Activated CD8-positive, alpha-beta memory T cell treated with anti-CD3 and anti-CD28 coated beads, Interleukin-2, amount 10 ng/mL, durations not matched to agents 7 days and 5 days (primary cell): ENCODE measurements at regions of chr1 and their contacts with region 1.

Region 1: DNA sequence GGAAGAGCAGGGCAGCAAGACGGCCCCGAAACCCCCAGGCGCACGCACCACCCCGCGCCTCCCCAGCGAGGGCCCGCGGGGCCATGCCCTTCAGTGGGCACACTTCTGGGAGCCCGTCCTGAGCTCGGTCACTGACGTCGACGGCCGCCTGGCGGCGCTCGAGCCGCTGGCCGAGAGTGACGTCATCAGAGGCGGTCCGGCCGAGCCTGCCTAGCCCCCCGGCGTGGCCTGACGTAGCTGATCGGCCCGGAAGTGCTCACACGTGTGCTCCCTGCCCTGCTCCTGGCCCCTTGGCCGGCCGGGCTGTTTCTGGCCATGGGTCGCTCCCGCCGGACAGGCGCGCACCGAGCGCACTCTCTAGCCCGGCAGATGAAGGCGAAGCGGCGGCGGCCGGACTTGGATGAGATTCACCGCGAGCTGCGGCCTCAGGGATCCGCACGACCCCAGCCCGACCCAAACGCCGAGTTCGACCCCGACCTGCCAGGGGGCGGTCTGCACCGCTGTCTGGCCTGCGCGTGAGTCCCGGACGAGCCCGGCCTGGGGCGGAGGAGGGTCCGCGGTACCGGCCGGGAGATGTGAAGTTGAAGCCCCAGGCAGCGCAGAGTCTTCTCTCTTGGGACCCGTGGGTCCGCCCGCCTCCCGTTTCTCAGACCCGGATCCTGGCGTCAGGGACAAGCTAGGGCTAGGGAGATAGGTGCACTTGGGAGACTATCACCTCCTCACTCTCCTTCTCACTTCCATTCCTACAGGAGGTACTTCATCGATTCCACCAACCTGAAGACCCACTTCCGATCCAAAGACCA is at the start of gene ZNF593:
- DNase-seq: peak; percentile 92
- ATAC-seq: peak; percentile 97
- H3K4me3 Mint-ChIP-seq: peak within 1 kb of the TSS; percentile 89
- H3K27ac Mint-ChIP-seq: peak within 1 kb of the TSS; percentile 88
- H3K4me1 Mint-ChIP-seq: peaks cover 26% of the 10 kb centered on the region
- H3K27me3 Mint-ChIP-seq: peaks cover 11% of the 10 kb centered on the region
- total RNA-seq, gene ZNF593: 40.1 to 48.1 TPM

Region 2: DNA sequence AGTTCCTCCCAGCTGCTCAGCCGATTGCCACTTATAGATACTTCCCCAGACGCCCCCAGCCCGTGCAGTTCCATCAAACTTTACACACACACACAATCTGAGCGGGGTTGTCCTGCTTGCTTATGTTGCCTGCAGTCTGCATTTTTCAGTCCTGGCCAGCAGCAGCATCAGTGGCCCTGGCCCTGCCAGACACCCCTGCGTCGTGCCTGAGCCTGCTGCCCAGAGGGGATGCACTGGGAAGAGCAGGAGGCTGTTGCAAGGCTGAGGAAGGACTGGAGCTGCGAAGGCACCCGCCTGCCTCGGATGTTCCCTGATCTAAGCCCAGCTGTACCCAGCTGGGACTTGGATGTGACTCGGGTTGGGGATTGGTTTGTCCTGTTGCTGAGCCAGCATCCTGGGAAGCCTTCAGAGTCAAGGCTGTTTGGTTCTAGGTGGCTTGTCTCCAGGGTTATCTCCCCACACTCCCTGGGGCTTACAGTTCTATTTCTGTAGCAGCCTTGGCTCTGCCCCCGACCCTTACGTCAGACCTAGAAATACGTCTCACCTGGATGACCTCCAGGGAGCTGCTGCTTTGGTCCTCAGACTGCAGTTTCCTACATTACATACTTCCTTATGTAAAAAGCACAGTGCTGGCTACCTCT is 511.0 kb before region 1 on chr1:
- CTCF ChIA-PET with region 1: no interaction called
- DNase-seq: no peak
- ATAC-seq: no peak
- H3K4me3 Mint-ChIP-seq: no peak overlapping the region
- H3K27ac Mint-ChIP-seq: no peak overlapping the region
- H3K4me1 Mint-ChIP-seq: no peaks in the 10 kb centered on the region
- H3K27me3 Mint-ChIP-seq: peaks cover 35% of the 10 kb centered on the region

Region 3: DNA sequence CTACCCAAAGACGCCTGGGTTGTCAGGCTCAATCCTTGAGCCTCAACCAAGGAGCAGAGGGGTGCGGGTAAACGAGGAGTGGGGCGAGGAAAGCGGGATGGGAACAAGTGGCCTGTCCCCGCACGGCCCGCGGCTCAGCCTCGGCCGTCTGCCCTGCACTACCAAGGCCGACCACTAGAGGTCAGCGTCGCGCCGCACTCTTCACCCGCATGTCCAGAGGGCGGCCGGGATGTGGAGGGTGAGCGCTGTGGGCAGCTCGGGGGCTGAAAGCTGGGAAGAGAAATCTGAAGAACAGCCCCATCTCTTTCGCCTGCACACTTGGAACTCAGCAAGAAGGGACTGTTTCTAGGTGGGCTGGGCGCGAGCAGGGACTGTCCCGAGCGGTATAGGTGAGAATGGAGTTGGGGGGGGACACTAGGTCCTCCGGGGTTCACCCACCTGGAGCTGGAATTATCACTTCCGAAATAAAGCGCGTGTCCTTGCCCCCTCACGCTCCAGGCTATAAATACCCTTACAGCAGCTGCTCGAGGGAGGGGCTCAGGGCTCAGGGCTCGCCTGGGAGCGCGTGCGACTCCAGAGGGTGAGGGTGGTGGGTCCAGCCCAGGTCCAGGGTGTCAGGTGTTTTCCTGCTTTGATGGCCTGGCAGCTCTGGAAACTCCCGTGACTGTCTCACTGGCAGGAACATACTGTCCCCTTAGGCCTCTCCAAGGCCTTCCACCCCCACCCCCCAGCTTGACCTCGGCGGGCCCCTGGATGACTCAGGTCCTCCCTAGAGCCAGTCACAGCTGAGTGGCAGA is 133.7 kb before region 1 on chr1:
- CTCF ChIA-PET with region 1: interaction called, 17 read pairs
- DNase-seq: peak; percentile 79
- ATAC-seq: peak; percentile 70
- H3K4me3 Mint-ChIP-seq: peak overlapping the region; percentile 89
- H3K27ac Mint-ChIP-seq: no peak overlapping the region
- H3K4me1 Mint-ChIP-seq: peaks cover 8% of the 10 kb centered on the region
- H3K27me3 Mint-ChIP-seq: peaks cover 15% of the 10 kb centered on the region

Region 4: DNA sequence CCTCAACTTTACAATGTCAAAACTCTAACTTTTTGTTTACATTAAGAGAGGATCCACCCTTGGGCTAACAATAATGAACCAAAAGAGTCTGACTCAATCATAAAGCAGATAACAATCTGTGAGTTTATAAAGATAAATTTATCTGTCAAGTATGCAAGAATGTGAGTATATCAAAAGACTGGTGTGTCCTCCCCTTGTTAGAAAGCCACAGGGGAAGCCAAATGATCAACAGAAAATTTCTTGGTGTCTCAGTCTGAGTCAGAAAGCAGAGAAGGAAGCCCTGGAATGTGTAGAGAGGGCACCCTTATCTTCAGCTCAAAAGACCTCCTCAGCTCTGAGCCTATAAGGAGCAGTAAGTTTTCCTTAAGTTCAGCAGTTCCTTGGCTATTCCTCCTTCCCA is 72.2 kb before region 1 on chr1:
- CTCF ChIA-PET with region 1: interaction called, 10 read pairs
- DNase-seq: peak; percentile 45
- ATAC-seq: peak; percentile 85
- H3K4me3 Mint-ChIP-seq: no peak overlapping the region
- H3K27ac Mint-ChIP-seq: no peak overlapping the region
- H3K4me1 Mint-ChIP-seq: peaks cover 17% of the 10 kb centered on the region
- H3K27me3 Mint-ChIP-seq: peaks cover 43% of the 10 kb centered on the region

Region 5: GRCh38 chr1:26138974-26139558 is 30.8 kb before region 1 on chr1:
- CTCF ChIA-PET with region 1: interaction called, 25 read pairs
- DNase-seq: no peak
- ATAC-seq: peak; percentile 45
- H3K4me3 Mint-ChIP-seq: no peak overlapping the region
- H3K27ac Mint-ChIP-seq: no peak overlapping the region
- H3K4me1 Mint-ChIP-seq: peaks cover 10% of the 10 kb centered on the region
- H3K27me3 Mint-ChIP-seq: peaks cover 5% of the 10 kb centered on the region

Region 6: DNA sequence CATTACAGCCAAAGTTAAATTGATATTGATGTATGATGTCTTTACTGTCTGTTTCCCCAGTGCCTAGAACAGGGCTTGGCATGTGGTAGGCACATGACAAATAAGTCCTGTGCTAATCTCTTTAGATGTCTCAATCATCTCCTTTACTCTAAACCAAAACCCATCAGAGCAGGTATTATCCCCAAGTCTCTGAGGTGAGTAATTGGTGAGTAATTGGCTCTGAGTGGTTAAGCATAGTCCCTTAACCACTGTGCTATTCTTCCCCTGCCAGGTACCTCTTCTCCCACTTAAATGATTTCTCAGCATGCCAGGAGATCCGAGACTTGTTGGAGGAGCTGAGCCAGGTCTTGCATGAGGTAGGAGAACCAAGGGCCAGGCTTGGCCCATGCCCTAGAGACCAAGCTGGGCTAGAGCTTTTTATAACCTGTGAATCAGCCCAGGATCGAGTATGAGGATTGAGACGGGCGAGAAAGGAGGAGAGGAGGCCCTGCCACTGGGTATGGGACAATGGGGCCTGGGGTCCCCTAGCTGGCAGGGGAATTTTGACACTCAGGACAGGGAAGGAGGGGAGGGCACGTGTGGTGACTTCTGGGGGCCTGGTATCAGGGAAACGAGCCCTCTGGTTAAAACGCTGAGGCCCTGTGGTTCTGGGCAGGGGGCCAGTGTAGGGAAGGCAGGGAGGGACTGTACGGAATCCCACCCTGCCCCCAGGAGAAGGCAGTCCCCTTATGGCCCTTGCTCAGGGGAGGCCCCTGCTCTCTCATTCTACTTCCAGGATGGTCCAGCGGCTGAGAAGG is 11.9 kb after region 1 on chr1:
- CTCF ChIA-PET with region 1: interaction called, 10 read pairs
- DNase-seq: no peak
- ATAC-seq: no peak
- H3K4me3 Mint-ChIP-seq: no peak overlapping the region
- H3K27ac Mint-ChIP-seq: no peak overlapping the region
- H3K4me1 Mint-ChIP-seq: no peaks in the 10 kb centered on the region
- H3K27me3 Mint-ChIP-seq: peaks cover under 1% of the 10 kb centered on the region

Region 7: DNA sequence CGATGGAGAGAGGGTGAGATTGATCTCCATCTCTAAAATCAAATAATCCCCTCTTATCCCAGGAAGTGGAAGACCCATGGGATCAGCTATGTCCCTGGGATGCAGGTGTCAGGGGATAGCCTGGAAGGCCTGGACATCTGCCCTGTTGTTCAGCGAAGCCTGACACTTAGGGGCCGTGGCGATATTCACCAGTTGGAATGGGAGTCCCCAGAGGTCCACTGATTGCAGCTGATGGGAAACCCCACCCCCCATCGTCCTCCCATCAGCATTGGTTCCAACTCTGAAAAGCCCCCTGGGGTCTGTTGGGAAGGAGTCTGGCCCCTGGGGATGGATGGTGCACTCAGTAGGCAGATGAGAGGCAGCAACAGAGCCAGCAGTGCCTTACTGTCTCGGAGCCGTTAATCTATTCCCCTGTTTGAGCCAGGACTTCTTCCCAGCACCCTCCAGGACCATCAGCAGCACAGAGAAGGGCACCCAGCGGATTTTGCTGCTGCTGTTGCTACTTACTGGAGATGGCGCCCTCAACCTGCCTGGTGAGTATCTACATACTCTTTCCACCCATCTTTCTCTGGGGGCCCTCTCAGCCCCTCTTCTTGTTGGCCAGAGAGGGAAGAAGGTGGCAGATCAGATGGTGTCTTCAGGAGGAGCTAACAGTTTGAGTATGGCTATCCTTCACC is 33.9 kb after region 1 on chr1:
- CTCF ChIA-PET with region 1: interaction called, 20 read pairs
- DNase-seq: no peak
- ATAC-seq: no peak
- H3K4me3 Mint-ChIP-seq: no peak overlapping the region
- H3K27ac Mint-ChIP-seq: no peak overlapping the region
- H3K4me1 Mint-ChIP-seq: peaks cover 33% of the 10 kb centered on the region
- H3K27me3 Mint-ChIP-seq: no peaks in the 10 kb centered on the region